A549 (cell line): ENCODE measurements at regions of chr4 and their contacts with region 1.

Region 1: GRCh38 chr4:122914292-122914904 is 8.0 kb downstream of the NUDT6 start:
- DNase-seq: peak in 1 of 2 experiments; percentile 42
- ATAC-seq: peak; percentile 86 to 87
- H3K4me3 ChIP-seq: no peak overlapping the region
- H3K27ac ChIP-seq: peak overlapping the region; percentile 62 to 77
- H3K4me1 ChIP-seq: peaks cover 74% of the 10 kb centered on the region
- CTCF ChIP-seq: peak; percentile 64
- EP300 ChIP-seq: no peak
- POLR2A ChIP-seq: no peak
- RAD21 ChIP-seq: peak; percentile 80 to 81

Region 2: DNA sequence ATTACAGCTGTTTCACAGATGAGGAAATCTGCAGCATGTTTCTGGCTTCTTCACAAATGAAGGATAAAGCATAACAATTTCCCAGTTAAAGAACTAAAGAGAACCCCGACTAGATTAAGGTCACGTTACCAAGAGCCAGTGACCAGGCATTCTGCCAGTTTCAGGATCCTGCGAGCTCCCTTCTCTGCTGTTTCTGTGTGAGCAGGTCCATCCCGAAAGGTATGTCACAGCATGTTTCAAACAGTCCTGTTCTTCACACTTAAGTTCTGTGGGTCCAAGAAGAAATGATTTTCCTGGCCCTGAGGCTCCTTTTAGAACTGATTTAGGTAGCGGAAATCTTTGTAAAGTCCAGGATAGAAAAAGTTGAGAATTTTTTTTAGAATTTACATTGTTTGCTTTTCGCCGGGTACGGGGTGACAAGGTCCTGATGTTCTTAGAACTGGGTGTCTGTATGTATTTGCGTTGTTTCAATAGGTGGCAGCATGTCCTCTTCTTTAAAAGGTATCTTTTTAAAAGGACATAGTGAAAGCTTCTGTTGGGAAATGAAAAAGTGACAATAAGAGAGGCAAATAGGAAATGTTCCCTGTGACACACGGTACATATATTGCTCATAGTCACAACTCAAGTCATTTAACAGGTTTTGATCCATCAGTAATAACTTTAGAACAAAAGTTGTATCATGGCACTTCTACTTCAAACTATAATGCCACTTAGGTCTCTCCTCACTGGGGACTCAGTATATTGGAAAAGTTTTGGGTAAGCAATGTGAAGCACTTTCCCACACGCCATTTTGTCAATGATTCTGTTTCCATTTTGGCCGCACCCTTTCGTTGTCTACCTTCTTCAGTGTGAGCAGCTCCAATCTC is 311.9 kb before region 1 on chr4:
- CTCF ChIA-PET with region 1: interaction called, 32 read pairs
- POLR2A ChIA-PET with region 1: no interaction called
- DNase-seq: peak; percentile 9 to 52
- ATAC-seq: peak; percentile 93
- H3K4me3 ChIP-seq: peak overlapping the region; percentile 28
- H3K27ac ChIP-seq: no peak overlapping the region; a peak in 1 of 6 replicates
- H3K4me1 ChIP-seq: 0 out of 3 replicates have a peak, but pooled peaks cover 4% of the 10 kb centered on the region
- CTCF ChIP-seq: peak; percentile 57
- EP300 ChIP-seq: no peak
- POLR2A ChIP-seq: no peak
- RAD21 ChIP-seq: peak; percentile 64 to 72

Region 3: GRCh38 chr4:122744229-122744628 is 170.2 kb before region 1 on chr4:
- CTCF ChIA-PET with region 1: interaction called, 14 read pairs
- POLR2A ChIA-PET with region 1: no interaction called
- DNase-seq: peak in 1 of 2 experiments; percentile 57
- ATAC-seq: peak; percentile 85 to 95
- H3K4me3 ChIP-seq: no peak overlapping the region
- H3K27ac ChIP-seq: peak overlapping the region; percentile 57 to 74; a peak in 5 of 6 replicates
- H3K4me1 ChIP-seq: peaks cover 18% of the 10 kb centered on the region
- CTCF ChIP-seq: no peak
- EP300 ChIP-seq: no peak
- POLR2A ChIP-seq: no peak
- RAD21 ChIP-seq: no peak

Region 4: GRCh38 chr4:122894827-122895226 is 19.6 kb before region 1 on chr4:
- CTCF ChIA-PET with region 1: interaction called, 13 read pairs
- POLR2A ChIA-PET with region 1: no interaction called
- DNase-seq: peak in 1 of 2 experiments; percentile 13
- ATAC-seq: peak in 1 of 2 experiments; percentile 45; a peak in 3 of 6 replicates
- H3K4me3 ChIP-seq: no peak overlapping the region
- H3K27ac ChIP-seq: peak overlapping the region; percentile 83 to 85
- H3K4me1 ChIP-seq: peaks cover 87% of the 10 kb centered on the region
- CTCF ChIP-seq: no peak
- EP300 ChIP-seq: no peak
- POLR2A ChIP-seq: no peak
- RAD21 ChIP-seq: no peak

Region 5: DNA sequence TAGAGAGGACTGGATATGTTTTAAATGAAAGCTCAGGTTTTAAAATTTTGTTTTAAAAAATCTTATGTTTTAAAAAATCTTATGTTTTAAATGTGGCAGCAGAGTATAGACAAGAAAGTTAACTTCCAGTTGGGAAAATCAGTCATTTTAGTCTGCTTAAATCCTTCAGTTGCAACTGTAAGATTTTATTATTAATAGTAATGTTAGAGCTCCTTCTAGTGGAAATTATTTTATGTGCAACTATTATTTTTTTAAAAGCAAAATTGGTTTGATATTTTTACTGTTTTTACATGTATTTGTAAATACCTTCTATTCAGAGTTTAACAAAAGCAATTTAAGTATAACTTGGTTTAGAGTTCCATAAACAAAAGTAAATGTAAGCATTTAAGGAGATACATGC is 16.5 kb after region 1 on chr4:
- CTCF ChIA-PET with region 1: interaction called, 15 read pairs
- POLR2A ChIA-PET with region 1: no interaction called
- DNase-seq: no peak
- ATAC-seq: no peak
- H3K4me3 ChIP-seq: no peak overlapping the region
- H3K27ac ChIP-seq: no peak overlapping the region
- H3K4me1 ChIP-seq: peaks cover 7% of the 10 kb centered on the region; the same call in 2 of the 3 replicates
- CTCF ChIP-seq: peak; percentile 51; the same call in 2 of the 3 replicates
- EP300 ChIP-seq: no peak
- POLR2A ChIP-seq: no peak
- RAD21 ChIP-seq: peak; percentile 58 to 75